CD4-positive, alpha-beta memory T cell (primary cell): ENCODE measurements at regions of chr12 and their contacts with region 1.

Region 1: DNA sequence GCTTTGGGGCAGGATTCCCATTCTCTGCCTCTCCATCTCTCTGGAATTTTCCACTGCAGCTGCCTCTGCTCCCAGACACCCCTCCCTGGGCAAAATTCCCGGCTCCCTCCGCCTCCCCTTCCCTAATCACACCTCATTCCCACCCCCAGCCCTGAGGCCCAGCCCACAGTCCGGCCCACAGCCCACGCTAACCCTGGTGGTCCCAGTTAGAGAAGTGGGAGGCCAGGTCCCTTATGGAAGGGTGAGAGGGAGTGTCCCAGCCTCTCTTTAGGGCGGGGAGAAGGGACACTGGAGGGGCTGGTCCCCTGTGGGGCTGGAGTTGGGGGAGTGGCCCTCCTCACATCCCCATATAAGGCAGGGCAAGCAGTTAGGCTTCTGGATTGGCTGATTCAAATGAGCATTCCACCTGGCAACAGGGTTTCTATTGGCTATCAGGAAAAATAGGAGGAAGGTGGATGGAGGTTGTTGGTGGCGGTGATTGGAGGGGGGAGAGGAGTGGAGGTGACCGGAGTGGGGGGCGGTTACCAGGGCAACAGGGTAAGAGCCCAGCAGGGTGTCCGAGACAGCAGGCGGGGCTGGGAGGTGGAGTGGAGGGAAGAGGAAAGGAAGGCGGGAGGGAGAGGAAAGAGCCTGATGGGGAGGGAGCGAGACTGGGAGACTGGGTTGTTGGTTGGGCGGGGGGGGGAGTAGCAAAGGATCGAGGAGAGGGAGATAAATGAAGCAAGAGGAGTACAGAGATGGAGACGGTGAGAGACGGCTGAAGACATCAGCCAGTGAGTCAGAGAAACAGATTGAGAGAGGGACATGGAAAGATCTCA is 1.9 kb upstream of the PTMS start:
- DNase-seq: peak; percentile 47 to 79 (median 56)
- H3K4me3 ChIP-seq: no peak overlapping the region
- H3K4me3 Mint-ChIP-seq: peak overlapping the region; percentile 3 to 72 (median 62)
- H3K27ac ChIP-seq: no peak overlapping the region
- H3K27ac Mint-ChIP-seq: peak overlapping the region in 2 of 7 donors; percentile 31 to 46
- H3K4me1 ChIP-seq: peaks cover 27% of the 10 kb centered on the region
- H3K4me1 Mint-ChIP-seq: peaks cover 15 to 40% (median 28%) of the 10 kb centered on the region in 4 donors
- H3K27me3 ChIP-seq: peaks cover 15% of the 10 kb centered on the region
- H3K27me3 Mint-ChIP-seq: peaks cover 16 to 25% of the 10 kb centered on the region in 2 donors

Region 2: DNA sequence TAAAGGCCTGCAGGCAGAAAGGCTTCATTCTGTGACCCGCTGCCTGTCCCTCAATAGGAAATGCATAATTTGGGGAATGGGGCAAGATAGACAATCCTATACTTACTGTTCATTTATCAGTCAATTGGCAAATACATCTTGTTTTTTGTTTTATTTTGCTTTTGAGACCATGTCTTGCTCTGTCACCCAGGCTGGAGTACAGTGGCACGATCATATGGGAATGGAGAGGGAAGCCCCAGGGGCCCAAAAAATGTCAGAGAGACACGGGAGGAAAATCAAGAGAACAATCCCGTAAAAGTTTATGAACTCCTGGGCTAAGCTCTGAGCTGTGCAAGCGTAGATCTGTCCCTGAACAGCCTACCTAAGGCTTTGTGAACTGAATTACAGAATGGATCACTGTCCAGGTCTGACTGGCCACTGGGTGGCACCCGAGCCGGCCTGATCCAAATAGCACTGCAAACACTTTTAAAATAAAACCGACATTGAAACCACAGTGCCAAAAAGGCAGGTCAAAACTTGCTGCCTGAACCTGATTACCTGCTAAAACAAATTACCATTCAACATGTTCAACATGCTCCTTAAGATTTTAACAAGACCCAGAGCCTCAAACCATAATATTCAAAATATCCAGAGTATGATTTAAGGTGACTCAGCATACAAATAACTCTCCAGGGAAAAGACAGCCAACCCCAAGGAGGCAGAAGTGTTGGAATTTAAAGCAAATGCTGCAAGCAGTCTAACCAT is 28.6 kb before region 1 on chr12:
- CTCF ChIA-PET with region 1: interaction called, 10 read pairs
- POLR2A ChIA-PET with region 1: no interaction called
- intact Hi-C with region 1: no loop called
- DNase-seq: peak in 4 of 5 donors; percentile 19 to 32 (median 26)
- H3K4me3 ChIP-seq: no peak overlapping the region
- H3K4me3 Mint-ChIP-seq: no peak overlapping the region
- H3K27ac ChIP-seq: no peak overlapping the region
- H3K27ac Mint-ChIP-seq: peak overlapping the region in 1 of 7 donors; percentile 16
- H3K4me1 ChIP-seq: no peaks in the 10 kb centered on the region
- H3K4me1 Mint-ChIP-seq: no peaks in the 10 kb centered on the region
- H3K27me3 ChIP-seq: no peaks in the 10 kb centered on the region
- H3K27me3 Mint-ChIP-seq: no peaks in the 10 kb centered on the region